Mucosa of descending colon (tissue), 3 donors: ENCODE measurements at regions of chr12 and their contacts with region 1.

Region 1: DNA sequence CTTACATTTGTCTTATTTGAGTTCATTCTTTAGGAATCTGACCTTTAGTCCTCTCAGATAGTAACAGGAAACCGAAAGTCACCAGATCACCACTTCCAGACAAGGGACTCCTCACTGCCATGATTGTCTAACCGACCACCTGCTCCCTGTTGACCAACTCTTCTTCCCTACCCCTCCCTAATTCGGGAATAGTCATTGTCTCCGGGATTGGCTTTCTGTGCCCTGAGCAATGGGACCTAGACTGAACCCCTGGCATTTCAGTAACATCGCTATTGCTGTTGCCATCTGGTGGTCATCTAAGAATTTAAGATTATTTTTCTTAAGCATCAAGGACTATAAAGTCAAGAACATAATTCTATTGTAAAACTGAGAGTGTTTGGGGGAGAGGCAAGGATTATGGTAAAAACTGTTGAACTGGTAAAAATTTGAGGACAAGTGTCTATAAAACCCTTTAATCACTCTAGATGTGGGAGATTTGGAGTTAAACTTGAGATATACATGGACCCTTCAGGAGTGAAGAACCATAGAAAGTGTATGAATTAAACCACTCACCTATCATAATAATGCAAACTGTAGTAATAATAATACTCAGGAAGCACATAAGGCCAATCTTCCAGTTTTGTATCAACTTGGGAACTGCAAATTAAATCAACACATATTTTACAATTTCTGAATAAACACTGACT is 6.3 kb downstream of the CLEC2A start:
- DNase-seq: no peak
- ATAC-seq: peak; percentile 34
- H3K4me3 ChIP-seq: no peak overlapping the region
- H3K4me1 ChIP-seq: no peaks in the 10 kb centered on the region
- CTCF ChIP-seq: no peak

Region 2: DNA sequence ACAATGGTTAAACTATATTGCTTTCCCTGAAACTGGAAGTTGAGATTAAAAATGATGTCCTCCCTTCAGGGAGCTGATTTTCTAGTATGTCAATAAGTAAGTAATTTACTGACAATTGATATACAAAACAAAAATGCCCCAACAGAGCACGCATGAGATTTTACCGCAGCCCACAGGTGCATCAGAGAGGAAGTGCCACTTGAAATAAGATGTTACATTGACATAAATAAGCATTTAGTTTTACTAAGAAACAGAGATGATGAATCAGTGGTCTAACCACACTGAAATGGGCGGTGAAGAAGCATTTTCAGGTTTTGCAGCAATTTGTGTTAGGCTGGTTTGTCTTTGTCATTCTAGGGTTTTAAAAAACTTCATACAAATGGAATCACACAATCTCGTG is 184.1 kb before region 1 on chr12:
- intact Hi-C with region 1: loop called in 1 of 2 experiments (anchors 10 kb)
- DNase-seq: peak in 2 of 3 donors; percentile 54 to 55
- ATAC-seq: peak; percentile 69
- H3K4me3 ChIP-seq: no peak overlapping the region
- H3K4me1 ChIP-seq: peaks cover 7% of the 10 kb centered on the region
- CTCF ChIP-seq: no peak

Region 3: DNA sequence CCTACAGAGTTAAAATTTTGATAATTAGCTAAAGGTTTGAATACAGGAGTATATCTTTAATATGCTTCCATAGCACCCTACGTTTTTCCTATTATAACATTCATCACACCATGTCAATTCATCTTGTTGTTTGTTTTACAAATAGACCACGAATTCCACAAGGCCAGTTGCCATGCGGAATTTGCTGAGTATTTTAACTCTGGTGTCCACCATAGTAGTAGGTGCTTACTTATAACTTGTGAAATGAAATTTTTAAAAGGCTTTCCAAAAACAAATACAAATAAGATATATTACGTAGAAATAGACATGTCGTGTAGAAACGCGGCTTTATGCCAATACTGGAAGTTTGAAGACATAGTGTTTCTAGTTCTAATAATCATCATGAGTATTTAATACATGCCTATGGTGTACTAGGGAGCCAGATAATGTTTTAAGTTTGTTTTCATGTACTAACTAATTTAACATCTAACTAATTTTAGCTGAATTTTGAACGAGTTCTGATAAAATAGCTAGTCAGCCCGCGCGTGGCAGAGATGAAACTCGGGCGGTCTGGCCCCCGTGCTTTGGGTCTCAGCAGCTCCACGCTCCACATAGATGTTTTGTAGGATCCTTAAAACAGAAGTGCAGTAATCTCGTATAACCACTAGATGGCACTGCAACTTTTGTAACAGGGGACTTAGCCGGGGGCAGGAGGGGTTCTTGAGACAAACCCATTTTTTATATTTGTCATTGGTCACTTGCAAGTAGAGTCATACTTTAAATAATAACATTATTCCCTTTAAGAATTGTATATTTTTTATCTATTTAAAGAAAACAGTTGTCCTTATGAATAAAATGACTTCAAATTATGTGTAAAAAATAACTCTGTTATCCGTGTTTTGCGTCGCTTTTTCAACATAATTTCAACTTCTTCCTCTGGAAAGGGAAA is 175.3 kb before region 1 on chr12:
- intact Hi-C with region 1: loop called (anchors 10 kb)
- DNase-seq: peak in 2 of 3 donors; percentile 53 to 59
- ATAC-seq: peak; percentile 83
- H3K4me3 ChIP-seq: no peak overlapping the region
- H3K4me1 ChIP-seq: peaks cover 7% of the 10 kb centered on the region
- CTCF ChIP-seq: peak; percentile 53

Region 4: GRCh38 chr12:10457760-10458159 is 531.9 kb after region 1 on chr12:
- intact Hi-C with region 1: no loop called
- DNase-seq: no peak
- ATAC-seq: no peak
- H3K4me3 ChIP-seq: no peak overlapping the region
- H3K4me1 ChIP-seq: peaks cover 5% of the 10 kb centered on the region
- CTCF ChIP-seq: no peak